Activated CD8-positive, alpha-beta T cell treated with anti-CD3 and anti-CD28 coated beads, Interleukin-2, amount 10 ng/mL, durations not matched to agents 7 days and 5 days (primary cell): ENCODE measurements at regions of chr4 and their contacts with region 1.

Region 1: GRCh38 chr4:56641494-56642051 is 39.5 kb downstream of the HOPX start:
- DNase-seq: no peak
- ATAC-seq: no peak
- H3K4me3 Mint-ChIP-seq: no peak overlapping the region
- H3K27ac Mint-ChIP-seq: no peak overlapping the region
- H3K4me1 Mint-ChIP-seq: peaks cover 25% of the 10 kb centered on the region
- H3K27me3 Mint-ChIP-seq: no peaks in the 10 kb centered on the region

Region 2: GRCh38 chr4:56626963-56627362 is 14.6 kb before region 1 on chr4:
- CTCF ChIA-PET with region 1: interaction called, 12 read pairs
- POLR2A ChIA-PET with region 1: no interaction called
- DNase-seq: no peak
- ATAC-seq: no peak
- H3K4me3 Mint-ChIP-seq: no peak overlapping the region
- H3K27ac Mint-ChIP-seq: no peak overlapping the region
- H3K4me1 Mint-ChIP-seq: peaks cover 8% of the 10 kb centered on the region
- H3K27me3 Mint-ChIP-seq: peaks cover 7% of the 10 kb centered on the region

Region 3: DNA sequence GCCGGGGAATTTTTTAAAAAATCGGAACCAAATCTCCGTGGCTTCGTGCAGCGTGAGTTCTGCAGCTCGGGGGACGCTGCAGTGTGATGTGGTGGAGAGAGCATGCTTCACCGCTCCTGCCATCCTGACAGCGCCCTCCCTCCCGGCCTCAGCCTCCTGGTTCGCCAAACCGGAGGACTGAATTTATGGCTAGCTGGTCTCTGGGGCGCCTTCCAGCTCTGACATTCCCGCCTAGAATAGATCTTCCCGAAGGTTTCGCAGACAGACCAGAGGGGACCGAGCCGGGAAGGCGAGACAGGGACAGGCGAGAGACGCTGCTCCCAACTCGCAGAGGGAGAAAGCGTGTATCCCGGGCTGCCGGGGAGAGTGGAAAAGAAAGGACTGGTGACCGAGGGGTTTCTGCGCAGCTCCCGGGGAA is 13.6 kb after region 1 on chr4:
- CTCF ChIA-PET with region 1: interaction called, 51 read pairs
- POLR2A ChIA-PET with region 1: interaction called, 3 read pairs
- DNase-seq: peak; percentile 30
- ATAC-seq: peak; percentile 20
- H3K4me3 Mint-ChIP-seq: peak overlapping the region; percentile 89
- H3K27ac Mint-ChIP-seq: peak overlapping the region; percentile 82
- H3K4me1 Mint-ChIP-seq: peaks cover 63% of the 10 kb centered on the region
- H3K27me3 Mint-ChIP-seq: peaks cover 19% of the 10 kb centered on the region

Region 4: GRCh38 chr4:57265831-57266582 is 624.4 kb after region 1 on chr4:
- CTCF ChIA-PET with region 1: no interaction called
- POLR2A ChIA-PET with region 1: no interaction called
- DNase-seq: no peak
- ATAC-seq: no peak
- H3K4me3 Mint-ChIP-seq: no peak overlapping the region
- H3K27ac Mint-ChIP-seq: no peak overlapping the region
- H3K4me1 Mint-ChIP-seq: no peaks in the 10 kb centered on the region
- H3K27me3 Mint-ChIP-seq: no peaks in the 10 kb centered on the region